Mammary epithelial cell (primary cell): ENCODE measurements at regions of chr1 and their contacts with region 1.

Region 1: GRCh38 chr1:164786980-164787833 is 228.2 kb downstream of the PBX1 start:
- DNase-seq: peak; percentile 71
- H3K4me3 ChIP-seq: peak overlapping the region in 1 of 3 experiments; percentile 7
- H3K27ac ChIP-seq: no peak overlapping the region
- H3K4me1 ChIP-seq: peaks cover 27% of the 10 kb centered on the region
- H3K27me3 ChIP-seq: no peaks in the 10 kb centered on the region
- CTCF ChIP-seq: peak; percentile 96

Region 2: DNA sequence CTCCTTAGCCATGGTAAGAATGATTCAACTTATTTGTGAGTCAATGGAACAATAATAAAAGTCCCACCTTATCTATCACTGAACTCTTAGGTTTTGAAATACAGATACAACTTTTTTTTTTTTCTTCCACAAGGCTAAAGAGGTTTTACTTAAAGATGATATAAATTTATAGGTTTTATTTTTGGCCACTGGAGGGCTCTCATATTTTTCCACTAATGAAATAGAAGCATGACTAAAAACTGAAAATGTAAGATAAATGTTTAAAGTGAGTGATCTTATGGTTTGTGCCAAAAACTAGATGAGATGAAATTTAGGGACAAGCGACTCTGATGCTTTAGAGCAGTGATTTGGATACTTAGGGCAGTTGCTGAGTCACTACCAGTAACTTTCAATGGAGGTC is 966.4 kb before region 1 on chr1:
- CTCF ChIA-PET with region 1: no interaction called
- dilution Hi-C with region 1: no loop called
- in situ Hi-C with region 1: no loop called
- intact Hi-C with region 1: loop called (anchors 2 kb)
- DNase-seq: no peak
- H3K4me3 ChIP-seq: no peak overlapping the region
- H3K27ac ChIP-seq: no peak overlapping the region
- H3K4me1 ChIP-seq: peaks cover 11% of the 10 kb centered on the region
- H3K27me3 ChIP-seq: no peaks in the 10 kb centered on the region
- CTCF ChIP-seq: peak; percentile 3 to 22

Region 3: DNA sequence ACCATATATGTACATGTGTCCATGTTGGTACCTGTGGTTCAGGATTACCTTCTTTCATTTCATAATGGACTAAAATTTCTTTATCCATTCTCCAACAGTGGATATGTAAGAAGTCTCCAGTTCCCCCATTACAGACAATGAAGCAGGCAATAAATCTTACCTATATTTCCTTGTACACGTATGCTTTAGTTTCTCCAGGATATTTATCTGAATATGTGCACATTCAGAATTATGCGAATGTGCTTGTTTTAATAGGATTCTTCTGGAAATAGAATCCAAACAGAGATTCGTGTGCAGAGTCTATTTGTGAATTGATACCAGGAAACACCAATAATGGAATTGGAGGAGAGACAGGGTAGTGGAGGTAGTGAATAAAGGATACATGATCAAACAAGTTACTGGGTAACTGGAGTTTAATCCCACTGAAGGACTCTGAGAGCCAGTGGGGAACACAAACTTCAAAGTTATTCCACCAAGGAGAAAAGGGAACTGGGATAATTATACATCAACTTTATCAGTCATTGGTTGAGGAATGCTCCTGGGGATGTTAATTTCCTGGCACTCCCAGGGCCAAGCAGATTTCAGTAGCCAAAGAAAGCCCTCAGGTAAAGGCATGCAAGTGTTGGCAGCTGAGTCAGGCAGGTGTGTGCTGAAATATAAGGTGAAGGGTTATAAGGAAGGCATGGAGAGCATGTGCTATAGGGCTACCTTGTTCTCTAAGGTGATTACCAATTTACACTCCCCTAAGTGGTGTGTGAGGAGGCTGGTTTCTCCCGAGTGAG is 603.2 kb before region 1 on chr1:
- CTCF ChIA-PET with region 1: no interaction called
- dilution Hi-C with region 1: no loop called
- in situ Hi-C with region 1: no loop called
- intact Hi-C with region 1: no loop called
- DNase-seq: peak; percentile 5
- H3K4me3 ChIP-seq: no peak overlapping the region
- H3K27ac ChIP-seq: no peak overlapping the region
- H3K4me1 ChIP-seq: no peaks in the 10 kb centered on the region
- H3K27me3 ChIP-seq: no peaks in the 10 kb centered on the region
- CTCF ChIP-seq: no peak

Region 4: GRCh38 chr1:164510435-164510834 is 276.8 kb before region 1 on chr1:
- CTCF ChIA-PET with region 1: no interaction called
- dilution Hi-C with region 1: no loop called
- in situ Hi-C with region 1: no loop called
- intact Hi-C with region 1: loop called (anchors 2 kb)
- DNase-seq: no peak
- H3K4me3 ChIP-seq: no peak overlapping the region
- H3K27ac ChIP-seq: no peak overlapping the region
- H3K4me1 ChIP-seq: no peaks in the 10 kb centered on the region
- H3K27me3 ChIP-seq: peaks cover 3% of the 10 kb centered on the region
- CTCF ChIP-seq: peak in 1 of 2 donors; percentile 27

Region 5: DNA sequence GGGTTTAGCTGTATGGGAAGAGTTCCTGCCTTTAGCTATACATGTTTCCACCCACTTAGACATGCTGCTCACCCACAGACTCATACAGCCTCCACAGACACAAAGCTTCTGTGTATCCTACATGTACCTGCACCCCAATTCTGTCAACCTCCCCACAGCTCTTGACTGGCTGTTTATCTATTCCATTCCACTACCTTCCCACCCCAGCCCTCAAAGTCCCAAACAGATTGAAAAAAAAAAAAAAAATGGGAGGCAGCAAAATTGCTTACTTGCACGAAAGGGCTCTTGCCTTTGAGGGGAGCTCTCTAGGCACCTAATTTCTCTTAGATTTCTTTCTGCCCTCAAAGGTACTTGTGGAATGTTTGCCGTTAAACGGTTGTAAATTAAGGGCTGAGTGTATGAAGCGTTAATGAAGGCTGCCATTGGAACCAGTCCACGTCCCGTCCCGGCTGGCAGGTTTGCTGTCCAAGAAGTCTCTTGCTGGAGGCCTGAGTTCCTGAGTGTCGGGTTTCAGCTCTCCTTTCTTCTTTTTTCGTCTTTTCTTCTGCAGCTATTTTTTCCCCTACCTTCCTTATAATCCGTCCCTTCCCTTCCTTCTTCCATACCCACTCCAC is 184.6 kb before region 1 on chr1:
- CTCF ChIA-PET with region 1: no interaction called
- dilution Hi-C with region 1: no loop called
- in situ Hi-C with region 1: no loop called
- intact Hi-C with region 1: no loop called
- DNase-seq: no peak
- H3K4me3 ChIP-seq: no peak overlapping the region
- H3K27ac ChIP-seq: peak overlapping the region; percentile 25
- H3K4me1 ChIP-seq: peaks cover 25% of the 10 kb centered on the region
- H3K27me3 ChIP-seq: no peaks in the 10 kb centered on the region
- CTCF ChIP-seq: peak in 1 of 2 donors; percentile 22

Region 6: DNA sequence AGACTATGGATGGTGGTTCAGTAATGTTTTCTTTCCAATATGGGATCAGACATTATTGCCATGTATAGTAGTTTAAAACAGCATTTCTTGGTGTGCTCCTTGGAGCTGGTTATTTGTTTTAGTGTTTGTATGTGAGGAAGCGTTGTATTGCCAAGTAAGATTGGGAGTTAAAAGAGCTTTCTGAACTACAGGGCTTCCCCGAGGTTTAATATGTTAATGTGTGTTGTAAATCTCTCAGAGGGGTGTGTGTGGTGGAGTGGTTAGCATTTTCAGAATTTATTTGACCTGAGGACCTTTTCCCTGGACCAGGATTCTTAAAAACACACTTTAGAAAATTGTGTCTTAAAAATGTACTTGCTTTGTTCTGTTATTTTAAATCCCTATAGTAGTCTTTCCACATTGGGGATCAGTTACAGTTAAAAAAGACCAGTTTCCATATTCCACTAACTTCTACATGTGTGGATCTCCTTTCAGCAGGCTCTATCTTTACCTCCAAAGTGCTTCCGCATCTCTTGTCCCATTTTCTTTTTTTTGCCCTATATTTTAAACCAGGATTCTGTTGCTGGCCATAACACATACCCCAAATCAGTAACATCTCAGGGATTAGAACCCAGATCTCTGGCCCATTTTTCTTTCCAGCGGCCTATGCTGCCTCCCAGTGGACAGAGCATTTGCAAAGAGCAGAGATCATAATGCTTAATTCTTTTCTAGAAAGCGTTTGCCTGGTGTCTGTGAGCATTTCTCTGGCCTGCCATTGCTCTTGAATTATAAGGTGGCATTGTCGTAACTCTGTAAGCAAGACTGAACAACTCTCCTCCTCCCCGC is 169.6 kb before region 1 on chr1:
- CTCF ChIA-PET with region 1: no interaction called
- dilution Hi-C with region 1: no loop called
- in situ Hi-C with region 1: loop called in 1 of 2 experiments (anchors 5 kb)
- intact Hi-C with region 1: loop called (anchors 1 kb)
- DNase-seq: peak; percentile 18
- H3K4me3 ChIP-seq: no peak overlapping the region
- H3K27ac ChIP-seq: no peak overlapping the region
- H3K4me1 ChIP-seq: peaks cover 11% of the 10 kb centered on the region
- H3K27me3 ChIP-seq: no peaks in the 10 kb centered on the region
- CTCF ChIP-seq: peak; percentile 65 to 73

Region 7: GRCh38 chr1:164914208-164914607 is 127.0 kb after region 1 on chr1:
- CTCF ChIA-PET with region 1: no interaction called
- dilution Hi-C with region 1: no loop called
- in situ Hi-C with region 1: no loop called
- intact Hi-C with region 1: loop called (anchors 1 kb)
- DNase-seq: peak; percentile 2
- H3K4me3 ChIP-seq: no peak overlapping the region
- H3K27ac ChIP-seq: no peak overlapping the region
- H3K4me1 ChIP-seq: no peaks in the 10 kb centered on the region
- H3K27me3 ChIP-seq: no peaks in the 10 kb centered on the region
- CTCF ChIP-seq: peak; percentile 5 to 42